ENCODE measurements at regions of chr17 and their contacts with region 1.

Region 1: GRCh38 chr17:17568749-17569195 is 22.7 kb downstream of the PEMT start:
- DNase-seq: peak; percentile 88
- ATAC-seq: peak; percentile 35

Region 2: GRCh38 chr17:17420561-17421269 is 148.1 kb before region 1 on chr17:
- intact Hi-C with region 1: loop called (anchors 2 kb)
- DNase-seq: peak; percentile 92
- ATAC-seq: peak; percentile 78

Region 3: GRCh38 chr17:17496189-17497064 is 72.3 kb before region 1 on chr17 and contains the start of gene RASD1:
- intact Hi-C with region 1: loop called (anchors 1 kb)
- DNase-seq: peak; percentile 96
- ATAC-seq: peak; percentile 90
- total RNA-seq, gene RASD1: 45.3 TPM

Region 4: DNA sequence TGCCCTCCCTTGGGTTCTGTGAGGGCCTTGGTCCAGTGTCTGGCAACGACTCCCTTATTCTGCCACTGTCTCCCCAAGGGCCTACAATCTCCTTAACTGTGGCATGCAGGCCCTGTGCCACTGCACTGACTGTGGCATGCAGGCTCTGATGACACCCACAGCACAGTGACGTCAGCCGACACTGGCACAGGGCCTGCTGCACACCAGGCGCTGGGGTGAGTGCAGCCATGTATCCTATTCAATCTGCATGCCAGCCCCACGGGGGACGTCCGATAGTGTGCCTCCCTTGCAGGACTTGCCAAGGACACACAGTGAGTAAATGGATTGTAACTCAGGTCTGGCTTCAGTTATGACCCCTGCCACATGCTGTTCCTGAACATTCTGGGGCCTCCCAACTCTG is 32.8 kb before region 1 on chr17:
- intact Hi-C with region 1: loop called (anchors 1 kb)
- DNase-seq: peak; percentile 92
- ATAC-seq: peak; percentile 91

Measured in Right ventricle myocardium inferior (tissue), 1 donor.